ENCODE measurements at regions of chr1 and their contacts with region 1.

Region 1: DNA sequence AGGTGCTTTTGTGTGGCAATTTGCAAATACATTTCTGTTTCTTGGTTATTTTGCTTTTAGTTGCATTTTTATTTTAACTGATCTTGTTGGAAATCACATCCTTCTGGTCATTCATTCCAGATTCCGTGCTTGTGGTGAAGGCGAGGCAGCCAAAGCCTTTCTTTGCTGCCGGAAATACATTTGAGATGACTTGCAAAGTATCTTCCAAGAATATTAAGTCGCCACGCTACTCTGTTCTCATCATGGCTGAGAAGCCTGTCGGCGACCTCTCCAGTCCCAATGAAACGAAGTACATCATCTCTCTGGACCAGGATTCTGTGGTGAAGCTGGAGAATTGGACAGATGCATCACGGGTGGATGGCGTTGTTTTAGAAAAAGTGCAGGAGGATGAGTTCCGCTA is 34.8 kb upstream of the CD101 start:
- DNase-seq: no peak
- H3K4me3 ChIP-seq: no peak overlapping the region
- H3K27ac ChIP-seq: no peak overlapping the region
- H3K4me1 ChIP-seq: no peaks in the 10 kb centered on the region
- H3K27me3 ChIP-seq: no peaks in the 10 kb centered on the region
- CTCF ChIP-seq: no peak
- POLR2A ChIP-seq: no peak

Region 2: DNA sequence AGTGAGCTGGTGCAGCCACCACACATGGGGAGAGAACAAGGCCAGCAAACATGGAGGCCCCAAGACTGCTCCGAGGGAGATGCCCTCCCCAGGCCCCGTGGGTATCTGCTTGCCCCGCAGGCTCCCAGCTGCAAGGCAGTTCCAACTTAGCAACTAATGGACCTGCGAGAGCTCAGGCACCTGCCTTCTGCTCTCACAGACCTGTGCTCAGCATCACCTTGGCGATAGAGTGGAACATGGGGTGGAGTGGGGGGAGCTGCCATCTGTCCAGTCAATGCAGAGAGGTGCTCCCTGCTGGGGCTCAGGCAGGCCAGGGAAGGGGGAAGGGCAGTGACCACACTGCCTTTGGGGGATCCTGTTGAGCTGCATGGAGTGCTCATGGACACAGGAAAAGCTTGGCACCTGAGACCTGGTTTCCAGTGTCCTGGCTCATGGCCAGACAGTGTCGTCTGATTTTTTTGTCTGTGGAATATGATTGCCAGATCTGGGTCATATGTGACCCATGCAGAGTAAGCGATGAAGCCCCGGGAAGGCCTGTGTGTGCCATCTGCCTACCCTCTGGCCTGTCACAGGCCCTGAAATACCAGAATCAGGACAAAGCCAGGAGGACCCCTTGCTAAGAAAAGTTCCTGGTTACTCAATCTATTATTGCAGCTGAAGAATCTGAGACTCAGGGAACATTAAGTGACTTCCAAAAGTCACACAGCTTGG is 599.1 kb after region 1 on chr1:
- intact Hi-C with region 1: loop called (anchors 5 kb)
- DNase-seq: no peak
- H3K4me3 ChIP-seq: no peak overlapping the region
- H3K27ac ChIP-seq: no peak overlapping the region
- H3K4me1 ChIP-seq: no peaks in the 10 kb centered on the region
- H3K27me3 ChIP-seq: no peaks in the 10 kb centered on the region
- CTCF ChIP-seq: no peak
- POLR2A ChIP-seq: no peak

Measured in breast epithelium (tissue), 4 donors.